B cell (primary cell): ENCODE measurements at regions of chr1 and their contacts with region 1.

Region 1: DNA sequence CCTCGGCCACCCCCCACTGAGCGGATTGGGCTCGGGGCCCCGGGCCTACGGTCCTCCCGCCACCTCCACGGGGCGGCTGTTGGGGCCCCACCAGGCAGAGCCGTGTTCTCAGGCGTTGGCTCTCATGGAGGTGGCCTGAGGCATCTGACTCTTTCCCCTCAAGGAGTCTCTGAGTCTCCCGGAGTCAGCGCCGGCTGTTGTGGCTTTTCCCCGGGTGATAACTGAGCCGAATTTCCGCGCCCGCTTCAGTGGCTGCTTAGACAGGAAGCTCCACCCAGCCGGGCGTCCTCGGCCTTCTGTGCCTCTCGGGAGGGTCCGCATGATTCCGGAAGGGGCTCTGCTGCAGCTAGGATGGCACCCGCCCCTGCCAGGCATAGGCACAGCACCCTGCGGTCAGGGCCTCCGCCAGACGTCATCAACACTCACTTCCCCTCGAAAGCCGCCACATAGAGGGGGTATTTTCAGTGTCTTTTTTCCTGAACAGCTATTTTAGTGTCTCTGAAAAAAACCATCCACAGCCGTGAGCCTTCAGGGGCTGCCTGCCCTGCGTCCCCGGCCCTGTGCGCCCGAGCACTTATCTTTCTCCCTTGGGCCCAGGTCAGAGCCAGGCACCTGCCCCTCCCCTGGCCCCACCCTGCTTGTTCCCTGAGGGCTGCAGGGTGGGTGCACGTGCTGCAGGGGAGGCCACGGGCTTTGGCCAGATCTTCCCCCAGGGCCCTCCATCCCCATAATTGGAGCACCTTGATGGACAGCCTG is 72.9 kb downstream of the SKI start:
- DNase-seq: peak; percentile 99
- ATAC-seq: peak; percentile 80
- H3K4me3 ChIP-seq: peak overlapping the region in 4 of 5 experiments; percentile 65 to 78 (median 70)
- H3K4me3 Mint-ChIP-seq: peak overlapping the region; percentile 93
- H3K27ac ChIP-seq: peak overlapping the region; percentile 99
- H3K27ac Mint-ChIP-seq: peak overlapping the region; percentile 99
- H3K4me1 ChIP-seq: peaks cover 40 to 56% of the 10 kb centered on the region in 2 donors
- H3K4me1 Mint-ChIP-seq: peaks cover 55% of the 10 kb centered on the region
- H3K27me3 ChIP-seq: no peaks in the 10 kb centered on the region
- H3K27me3 Mint-ChIP-seq: no peaks in the 10 kb centered on the region
- CTCF ChIP-seq: no peak

Region 2: DNA sequence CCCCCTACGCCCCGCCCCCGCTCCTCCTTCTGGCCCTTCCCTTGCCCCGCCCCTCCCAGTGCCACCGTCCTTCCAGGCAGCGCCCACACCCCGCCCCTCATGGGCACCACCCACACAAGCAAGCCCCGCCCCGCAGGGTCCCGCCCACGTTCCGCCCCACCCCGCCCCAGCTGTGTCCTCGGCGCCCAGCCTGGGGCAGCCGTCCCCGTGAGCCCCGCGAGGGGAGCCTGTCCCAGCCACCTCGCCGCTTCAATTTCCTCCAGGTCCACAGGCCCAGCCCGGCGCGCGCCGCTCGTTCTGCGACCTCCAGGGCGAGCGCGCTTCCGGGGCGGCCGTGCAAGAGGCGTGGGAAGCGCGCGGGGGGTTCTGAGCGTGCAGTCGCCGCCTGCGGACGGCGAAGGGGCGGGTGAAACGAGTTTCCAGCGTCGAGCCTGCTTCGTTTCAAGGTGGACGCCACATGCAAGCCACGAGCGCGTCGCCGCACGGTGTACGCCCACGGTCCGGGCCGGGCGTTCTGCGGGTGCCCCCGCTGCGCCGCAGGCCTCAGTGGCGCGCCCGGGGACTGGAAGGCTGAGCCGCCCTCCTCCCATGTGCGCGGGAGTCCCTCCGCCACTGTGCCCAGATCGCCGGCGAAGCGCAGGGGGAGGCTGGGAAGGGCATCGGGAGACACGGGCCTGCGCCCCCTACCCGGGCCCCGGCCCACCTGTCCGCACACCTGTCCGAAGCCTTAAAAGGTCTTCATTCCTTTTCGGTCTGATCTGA is 95.7 kb before region 1 on chr1:
- CTCF ChIA-PET with region 1: no interaction called
- POLR2A ChIA-PET with region 1: no interaction called
- intact Hi-C with region 1: loop called (anchors 1 kb)
- DNase-seq: peak; percentile 95
- ATAC-seq: peak; percentile 93
- H3K4me3 ChIP-seq: peak overlapping the region in 4 of 5 experiments; percentile 46 to 70 (median 64)
- H3K4me3 Mint-ChIP-seq: peak overlapping the region; percentile 77
- H3K27ac ChIP-seq: peak overlapping the region in 1 of 2 donors; percentile 47
- H3K27ac Mint-ChIP-seq: peak overlapping the region; percentile 72
- H3K4me1 ChIP-seq: peaks cover 32 to 44% of the 10 kb centered on the region in 2 donors
- H3K4me1 Mint-ChIP-seq: peaks cover 30% of the 10 kb centered on the region
- H3K27me3 ChIP-seq: no peaks in the 10 kb centered on the region
- H3K27me3 Mint-ChIP-seq: no peaks in the 10 kb centered on the region
- CTCF ChIP-seq: no peak

Region 3: GRCh38 chr1:2233997-2234761 is 66.8 kb before region 1 on chr1:
- CTCF ChIA-PET with region 1: interaction called, 4 read pairs
- POLR2A ChIA-PET with region 1: interaction called, 30 read pairs
- intact Hi-C with region 1: loop called (anchors 1 kb)
- DNase-seq: peak; percentile 78
- ATAC-seq: peak; percentile 79
- H3K4me3 ChIP-seq: peak overlapping the region in 4 of 5 experiments; percentile 3 to 49 (median 36)
- H3K4me3 Mint-ChIP-seq: peak overlapping the region; percentile 86
- H3K27ac ChIP-seq: peak overlapping the region; percentile 31 to 93
- H3K27ac Mint-ChIP-seq: peak overlapping the region; percentile 97
- H3K4me1 ChIP-seq: peaks cover 77 to 96% of the 10 kb centered on the region in 2 donors
- H3K4me1 Mint-ChIP-seq: peaks cover 81% of the 10 kb centered on the region
- H3K27me3 ChIP-seq: no peaks in the 10 kb centered on the region
- H3K27me3 Mint-ChIP-seq: no peaks in the 10 kb centered on the region
- CTCF ChIP-seq: no peak

Region 4: GRCh38 chr1:2290595-2291510 is 10.2 kb before region 1 on chr1:
- CTCF ChIA-PET with region 1: interaction called, 11 read pairs
- POLR2A ChIA-PET with region 1: interaction called, 20 read pairs
- intact Hi-C with region 1: loop called (anchors 1 kb)
- DNase-seq: peak; percentile 89
- ATAC-seq: peak; percentile 81
- H3K4me3 ChIP-seq: peak overlapping the region in 4 of 5 experiments; percentile 36 to 54 (median 42)
- H3K4me3 Mint-ChIP-seq: peak overlapping the region; percentile 83
- H3K27ac ChIP-seq: peak overlapping the region; percentile 29 to 73
- H3K27ac Mint-ChIP-seq: peak overlapping the region; percentile 84
- H3K4me1 ChIP-seq: peaks cover 57 to 77% of the 10 kb centered on the region in 2 donors
- H3K4me1 Mint-ChIP-seq: peaks cover 79% of the 10 kb centered on the region
- H3K27me3 ChIP-seq: no peaks in the 10 kb centered on the region
- H3K27me3 Mint-ChIP-seq: no peaks in the 10 kb centered on the region
- CTCF ChIP-seq: no peak

Region 5: GRCh38 chr1:2391041-2391930 is 90.3 kb after region 1 on chr1 and contains the starts of genes MORN1 and RER1:
- CTCF ChIA-PET with region 1: no interaction called
- POLR2A ChIA-PET with region 1: interaction called, 5 read pairs
- intact Hi-C with region 1: loop called (anchors 1 kb)
- DNase-seq: peak; percentile 99
- ATAC-seq: peak; percentile 94
- H3K4me3 ChIP-seq: peak within 1 kb of the TSS; percentile 61 to 92 (median 76)
- H3K4me3 Mint-ChIP-seq: peak within 1 kb of the TSS; percentile 92
- H3K27ac ChIP-seq: peak within 1 kb of the TSS; percentile 24 to 88
- H3K27ac Mint-ChIP-seq: peak within 1 kb of the TSS; percentile 88
- H3K4me1 ChIP-seq: peaks cover 25 to 47% of the 10 kb centered on the region in 2 donors
- H3K4me1 Mint-ChIP-seq: peaks cover 47% of the 10 kb centered on the region
- H3K27me3 ChIP-seq: no peaks in the 10 kb centered on the region
- H3K27me3 Mint-ChIP-seq: no peaks in the 10 kb centered on the region
- CTCF ChIP-seq: no peak
- total RNA-seq, gene MORN1: 30.4 and 32.6 TPM in 2 replicates
- total RNA-seq, gene RER1: 117 and 118 TPM in 2 replicates

Region 6: GRCh38 chr1:2586154-2587070 is 285.4 kb after region 1 on chr1 and contains the start of gene PRXL2B:
- CTCF ChIA-PET with region 1: no interaction called
- POLR2A ChIA-PET with region 1: interaction called, 3 read pairs
- intact Hi-C with region 1: loop called (anchors 1 kb)
- DNase-seq: peak; percentile 97
- ATAC-seq: peak; percentile 67
- H3K4me3 ChIP-seq: peak within 1 kb of the TSS; percentile 63 to 81 (median 77)
- H3K4me3 Mint-ChIP-seq: peak within 1 kb of the TSS; percentile 95
- H3K27ac ChIP-seq: peak within 1 kb of the TSS; percentile 98 to 99
- H3K27ac Mint-ChIP-seq: peak within 1 kb of the TSS; percentile 99
- H3K4me1 ChIP-seq: peaks cover 38 to 53% of the 10 kb centered on the region in 2 donors
- H3K4me1 Mint-ChIP-seq: peaks cover 43% of the 10 kb centered on the region
- H3K27me3 ChIP-seq: no peaks in the 10 kb centered on the region
- H3K27me3 Mint-ChIP-seq: no peaks in the 10 kb centered on the region
- CTCF ChIP-seq: no peak
- total RNA-seq, gene PRXL2B: 27.0 and 27.9 TPM in 2 replicates